Gastrocnemius medialis (tissue), 4 donors: ENCODE measurements at regions of chr1 and their contacts with region 1.

Region 1: DNA sequence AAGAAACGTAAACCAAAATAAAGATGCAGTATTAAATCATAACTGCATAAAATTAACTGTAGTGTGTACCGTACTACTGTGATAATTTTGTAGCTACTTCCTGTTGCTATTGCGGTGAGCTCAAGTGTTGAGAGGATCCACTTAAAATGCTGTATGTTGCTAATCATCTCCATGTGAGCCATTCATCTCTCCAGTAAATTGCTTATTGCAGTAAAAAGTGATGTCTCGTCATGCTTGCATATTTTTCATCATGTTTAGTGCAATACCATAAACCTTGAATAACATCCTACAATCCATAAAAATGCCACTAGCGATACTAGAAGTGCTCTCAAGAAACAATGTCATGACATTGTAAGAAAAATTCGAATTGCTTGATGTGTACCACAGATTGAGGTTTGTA is 66.3 kb downstream of the RAVER2 start:
- DNase-seq: no peak
- ATAC-seq: no peak
- H3K4me3 ChIP-seq: no peak overlapping the region
- H3K27ac ChIP-seq: no peak overlapping the region
- H3K4me1 ChIP-seq: peaks cover 0 to 6% of the 10 kb centered on the region in 2 donors
- H3K27me3 ChIP-seq: no peaks in the 10 kb centered on the region
- CTCF ChIP-seq: no peak
- POLR2A ChIP-seq: no peak

Region 2: DNA sequence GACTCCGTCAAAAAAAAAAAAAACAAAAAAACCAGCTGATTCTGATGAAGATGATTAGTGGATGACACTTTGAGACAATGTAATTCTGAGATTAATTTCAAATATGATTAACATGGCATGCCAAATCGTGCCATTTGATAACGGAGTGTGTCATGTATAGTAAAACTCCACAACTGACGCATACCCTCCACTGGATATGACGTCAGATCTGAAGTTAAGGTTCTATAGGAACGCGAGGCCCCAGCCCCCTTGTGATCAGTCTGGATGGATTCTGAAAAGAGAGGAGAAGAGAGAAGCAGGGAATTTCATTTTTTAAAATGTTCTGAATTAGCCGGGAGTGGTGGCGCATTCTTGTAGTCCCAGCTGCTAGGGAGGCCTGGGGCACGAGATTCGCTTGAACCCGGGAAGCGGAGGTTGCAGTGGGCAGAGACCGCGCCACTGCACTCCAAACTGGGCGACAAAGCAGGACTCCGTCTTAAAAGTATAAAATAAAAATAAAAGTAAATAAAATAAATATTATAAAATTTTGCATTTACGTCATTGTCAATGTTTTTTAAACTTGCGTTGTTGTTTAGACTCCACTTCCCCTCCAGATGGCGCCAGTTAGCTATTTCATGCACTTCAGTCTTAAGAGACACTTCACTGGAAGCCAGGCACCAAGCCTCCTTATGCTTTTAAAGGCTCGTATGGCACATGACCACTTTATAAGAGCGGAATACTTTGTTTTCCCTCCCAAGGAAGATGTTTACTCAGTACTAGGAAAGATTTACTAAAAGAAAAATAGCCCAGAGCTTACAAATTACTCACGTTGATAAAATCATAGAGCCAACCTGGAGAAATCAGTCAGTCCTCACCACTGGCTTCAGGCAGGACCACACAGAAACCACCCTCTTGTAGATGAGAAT is 542.2 kb before region 1 on chr1:
- in situ Hi-C with region 1: loop called in 1 of 4 experiments (anchors 10 kb)
- intact Hi-C with region 1: no loop called
- DNase-seq: peak; percentile 45 to 47
- ATAC-seq: peak; percentile 77 to 83
- H3K4me3 ChIP-seq: no peak overlapping the region
- H3K27ac ChIP-seq: no peak overlapping the region
- H3K4me1 ChIP-seq: no peaks in the 10 kb centered on the region
- H3K27me3 ChIP-seq: no peaks in the 10 kb centered on the region
- CTCF ChIP-seq: peak; percentile 52 to 79 (median 63)
- POLR2A ChIP-seq: no peak

Region 3: GRCh38 chr1:64686828-64687724 is 124.1 kb before region 1 on chr1:
- in situ Hi-C with region 1: loop called in 1 of 4 experiments (anchors 10 kb)
- intact Hi-C with region 1: no loop called
- DNase-seq: no peak
- ATAC-seq: peak; percentile 52 to 60
- H3K4me3 ChIP-seq: no peak overlapping the region
- H3K27ac ChIP-seq: no peak overlapping the region
- H3K4me1 ChIP-seq: no peaks in the 10 kb centered on the region
- H3K27me3 ChIP-seq: no peaks in the 10 kb centered on the region
- CTCF ChIP-seq: peak; percentile 64 to 84 (median 69)
- POLR2A ChIP-seq: no peak